OCI-LY7 (cell line): ENCODE measurements at regions of chr6 and their contacts with region 1.

Region 1: DNA sequence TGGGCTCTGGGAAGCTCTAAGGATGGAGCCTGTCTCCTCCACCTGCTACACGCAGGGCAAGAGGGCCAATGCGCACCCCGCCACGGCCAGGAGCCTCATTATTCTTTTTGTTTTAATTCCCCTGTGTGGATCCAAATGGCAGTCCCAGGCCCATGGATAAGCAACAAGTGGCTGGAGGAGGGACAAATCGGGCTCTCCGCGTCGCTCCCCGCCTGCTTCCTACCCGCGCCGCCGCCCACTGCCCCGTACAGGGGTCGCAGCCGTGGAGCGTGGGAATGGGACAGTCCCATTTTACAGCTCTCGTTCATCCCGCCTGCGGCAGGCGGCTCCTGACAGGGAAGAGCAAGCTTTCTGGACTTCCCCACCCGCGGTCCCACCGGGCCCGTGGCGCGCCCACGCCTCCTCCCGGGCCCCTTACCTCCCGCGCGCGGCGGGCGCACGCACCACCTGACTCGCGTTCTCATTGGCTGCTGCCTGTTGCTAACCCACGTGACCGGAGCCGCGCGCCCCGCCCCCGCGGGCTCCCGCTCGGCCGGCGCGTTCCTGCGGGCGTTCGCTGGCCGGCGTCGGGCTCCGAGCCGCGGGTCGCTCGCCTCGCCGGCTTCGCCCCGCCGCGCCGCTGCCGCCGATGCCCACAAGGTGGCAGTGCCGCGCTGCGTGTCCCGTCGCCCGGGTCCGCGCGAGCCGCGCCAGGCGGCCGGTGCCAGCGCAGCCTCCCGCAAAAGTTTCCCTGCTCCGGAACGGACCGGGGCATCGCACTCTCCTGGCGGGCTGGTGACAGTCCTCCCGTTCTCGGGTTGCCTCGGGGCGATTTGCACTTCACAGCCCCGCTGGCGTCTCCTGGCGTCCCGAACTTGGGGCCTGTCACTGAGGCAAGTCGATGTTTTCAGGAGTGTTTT is 93.3 kb downstream of the CD83 start:
- DNase-seq: peak; percentile 95
- H3K4me3 ChIP-seq: peak overlapping the region; percentile 69
- H3K27ac ChIP-seq: peak overlapping the region; percentile 57
- H3K4me1 ChIP-seq: peaks cover 28% of the 10 kb centered on the region
- CTCF ChIP-seq: peak; percentile 66

Region 2: DNA sequence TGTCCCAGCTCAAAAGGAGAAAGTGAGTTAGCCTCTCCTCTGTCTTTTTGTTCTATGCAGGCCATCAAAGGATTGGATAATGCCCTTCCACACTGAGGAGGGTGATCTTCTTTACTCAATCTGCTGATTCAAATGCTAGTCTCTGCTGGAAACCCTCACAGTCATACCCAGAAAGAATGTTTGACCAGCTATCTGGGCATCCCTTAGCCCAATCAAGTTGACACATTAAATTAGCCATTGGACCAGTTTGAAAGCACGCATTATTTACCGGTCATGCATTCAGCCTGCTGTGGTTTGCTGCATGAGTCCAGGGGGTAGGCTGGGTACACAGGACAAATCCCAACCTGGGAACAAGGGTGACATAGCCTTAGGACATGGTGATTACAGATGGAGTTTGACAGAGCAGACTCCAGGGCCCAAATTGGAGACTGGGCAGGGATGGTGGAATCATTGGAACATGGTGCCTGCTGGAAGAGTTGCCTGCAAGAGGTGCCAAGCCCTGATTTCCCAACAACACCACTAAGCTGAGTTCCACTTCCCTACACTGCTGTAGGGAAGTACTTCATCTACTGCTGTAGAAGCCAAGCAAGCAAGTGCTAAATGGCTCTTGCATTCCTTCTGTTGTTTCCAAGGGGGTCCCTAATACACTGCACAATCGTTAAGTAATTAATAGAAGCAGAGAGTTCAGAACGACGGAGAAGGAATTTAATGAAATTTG is 198.4 kb before region 1 on chr6:
- CTCF ChIA-PET with region 1: no interaction called
- POLR2A ChIA-PET with region 1: no interaction called
- intact Hi-C with region 1: no loop called
- DNase-seq: no peak
- H3K4me3 ChIP-seq: no peak overlapping the region
- H3K27ac ChIP-seq: no peak overlapping the region
- H3K4me1 ChIP-seq: no peaks in the 10 kb centered on the region
- CTCF ChIP-seq: no peak

Region 3: GRCh38 chr6:14241255-14242070 is 30.6 kb after region 1 on chr6:
- CTCF ChIA-PET with region 1: no interaction called
- POLR2A ChIA-PET with region 1: interaction called, 11 read pairs
- intact Hi-C with region 1: loop called (anchors 1 kb)
- DNase-seq: peak; percentile 95
- H3K4me3 ChIP-seq: peak overlapping the region; percentile 56
- H3K27ac ChIP-seq: peak overlapping the region; percentile 100
- H3K4me1 ChIP-seq: peaks cover 95% of the 10 kb centered on the region
- CTCF ChIP-seq: no peak

Region 4: DNA sequence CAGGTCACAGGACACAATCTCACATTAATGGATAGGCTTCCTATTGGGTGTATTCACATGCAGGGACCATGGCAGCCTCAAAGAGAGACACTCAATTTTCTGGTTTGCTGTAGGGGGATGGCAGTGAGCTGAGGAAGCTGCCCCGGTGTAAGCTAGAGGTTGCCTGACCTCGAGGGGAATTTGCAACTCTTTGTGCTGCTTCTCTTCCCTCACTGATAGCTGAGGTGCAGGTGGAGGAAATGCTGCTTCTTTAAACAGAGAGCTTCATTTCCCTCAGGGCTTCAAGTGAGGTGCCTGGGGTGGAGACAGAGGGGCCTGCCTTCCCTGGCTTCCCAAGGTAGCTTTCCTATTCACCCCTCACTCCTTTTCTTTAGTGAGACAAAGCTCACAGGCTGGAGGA is 58.5 kb after region 1 on chr6:
- CTCF ChIA-PET with region 1: no interaction called
- POLR2A ChIA-PET with region 1: no interaction called
- intact Hi-C with region 1: no loop called
- DNase-seq: peak; percentile 84
- H3K4me3 ChIP-seq: no peak overlapping the region
- H3K27ac ChIP-seq: peak overlapping the region; percentile 70
- H3K4me1 ChIP-seq: peaks cover 51% of the 10 kb centered on the region
- CTCF ChIP-seq: no peak

Region 5: DNA sequence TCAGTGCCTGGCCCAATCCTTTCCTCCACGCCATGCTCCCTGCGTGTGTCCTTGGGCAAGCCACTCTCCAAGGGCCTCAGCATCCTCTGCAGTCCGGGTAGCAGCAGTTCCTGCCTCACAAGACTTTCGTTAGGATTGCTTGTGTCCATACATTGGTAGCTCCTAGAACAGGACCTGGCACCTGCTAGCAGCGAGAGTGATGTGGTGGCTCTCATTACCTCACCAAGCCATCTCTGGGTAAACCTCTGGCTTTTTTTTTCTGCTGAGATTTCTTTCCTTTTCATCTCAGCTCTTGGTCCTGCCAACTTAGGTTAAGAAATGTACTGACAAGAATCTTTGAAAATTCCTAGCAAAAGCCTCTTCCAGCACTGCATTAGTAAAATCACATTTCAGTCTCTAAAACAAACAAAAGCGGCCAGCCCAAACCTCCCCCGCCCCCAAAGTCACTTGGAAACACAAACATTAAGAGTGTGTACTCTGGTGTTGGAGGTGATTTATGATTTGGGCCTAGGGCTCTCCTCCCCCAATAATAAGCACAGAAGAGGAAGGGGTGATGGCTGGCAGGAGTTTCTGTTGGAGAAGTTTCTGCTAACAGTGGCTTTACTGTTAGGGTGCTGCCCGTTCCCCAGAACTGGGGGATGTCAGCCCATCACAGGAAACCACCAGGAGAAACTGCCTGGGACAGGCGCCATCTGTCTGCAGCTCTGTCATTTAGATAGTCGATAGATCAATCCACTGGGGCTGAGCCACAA is 105.9 kb after region 1 on chr6:
- CTCF ChIA-PET with region 1: no interaction called
- POLR2A ChIA-PET with region 1: no interaction called
- intact Hi-C with region 1: loop called (anchors 1 kb)
- DNase-seq: peak; percentile 48
- H3K4me3 ChIP-seq: no peak overlapping the region
- H3K27ac ChIP-seq: no peak overlapping the region
- H3K4me1 ChIP-seq: peaks cover 47% of the 10 kb centered on the region
- CTCF ChIP-seq: peak; percentile 84

Region 6: GRCh38 chr6:14464055-14464454 is 253.1 kb after region 1 on chr6:
- CTCF ChIA-PET with region 1: no interaction called
- POLR2A ChIA-PET with region 1: no interaction called
- intact Hi-C with region 1: loop called (anchors 10 kb)
- DNase-seq: no peak
- H3K4me3 ChIP-seq: no peak overlapping the region
- H3K27ac ChIP-seq: no peak overlapping the region
- H3K4me1 ChIP-seq: no peaks in the 10 kb centered on the region
- CTCF ChIP-seq: no peak

Region 7: GRCh38 chr6:14665827-14666724 is 455.2 kb after region 1 on chr6:
- CTCF ChIA-PET with region 1: no interaction called
- POLR2A ChIA-PET with region 1: no interaction called
- intact Hi-C with region 1: loop called (anchors 1 kb)
- DNase-seq: peak; percentile 53
- H3K4me3 ChIP-seq: peak overlapping the region; percentile 2
- H3K27ac ChIP-seq: no peak overlapping the region
- H3K4me1 ChIP-seq: peaks cover 89% of the 10 kb centered on the region
- CTCF ChIP-seq: no peak

Region 8: GRCh38 chr6:15245361-15246216 is 1034.7 kb after region 1 on chr6 and contains the start of gene JARID2:
- CTCF ChIA-PET with region 1: no interaction called
- POLR2A ChIA-PET with region 1: no interaction called
- intact Hi-C with region 1: loop called (anchors 2 kb)
- DNase-seq: peak; percentile 95
- H3K4me3 ChIP-seq: peak within 1 kb of the TSS; percentile 80
- H3K27ac ChIP-seq: peak within 1 kb of the TSS; percentile 55
- H3K4me1 ChIP-seq: peaks cover 27% of the 10 kb centered on the region
- CTCF ChIP-seq: no peak
- total RNA-seq, gene JARID2: 18.4 and 19.0 TPM in 2 replicates